ENCODE measurements at regions of chr6 and their contacts with region 1.

Region 1: GRCh38 chr6:37691904-37692806 is 5.5 kb downstream of the MDGA1 start:
- DNase-seq: peak; percentile 69 to 96
- H3K4me3 ChIP-seq: no peak overlapping the region
- H3K27ac ChIP-seq: no peak overlapping the region
- H3K4me1 ChIP-seq: peaks cover 2 to 14% (median 10%) of the 10 kb centered on the region in 4 experiments; a peak in 6 of 7 replicates
- H3K27me3 ChIP-seq: peaks cover 42 to 49% (median 48%) of the 10 kb centered on the region in 4 experiments
- CTCF ChIP-seq: peak in 2 of 3 experiments; percentile 97 to 99; a peak in 3 of 4 replicates
- EP300 ChIP-seq: no peak
- POLR2A ChIP-seq: no peak
- RAD21 ChIP-seq: peak; percentile 99 to 100

Region 2: DNA sequence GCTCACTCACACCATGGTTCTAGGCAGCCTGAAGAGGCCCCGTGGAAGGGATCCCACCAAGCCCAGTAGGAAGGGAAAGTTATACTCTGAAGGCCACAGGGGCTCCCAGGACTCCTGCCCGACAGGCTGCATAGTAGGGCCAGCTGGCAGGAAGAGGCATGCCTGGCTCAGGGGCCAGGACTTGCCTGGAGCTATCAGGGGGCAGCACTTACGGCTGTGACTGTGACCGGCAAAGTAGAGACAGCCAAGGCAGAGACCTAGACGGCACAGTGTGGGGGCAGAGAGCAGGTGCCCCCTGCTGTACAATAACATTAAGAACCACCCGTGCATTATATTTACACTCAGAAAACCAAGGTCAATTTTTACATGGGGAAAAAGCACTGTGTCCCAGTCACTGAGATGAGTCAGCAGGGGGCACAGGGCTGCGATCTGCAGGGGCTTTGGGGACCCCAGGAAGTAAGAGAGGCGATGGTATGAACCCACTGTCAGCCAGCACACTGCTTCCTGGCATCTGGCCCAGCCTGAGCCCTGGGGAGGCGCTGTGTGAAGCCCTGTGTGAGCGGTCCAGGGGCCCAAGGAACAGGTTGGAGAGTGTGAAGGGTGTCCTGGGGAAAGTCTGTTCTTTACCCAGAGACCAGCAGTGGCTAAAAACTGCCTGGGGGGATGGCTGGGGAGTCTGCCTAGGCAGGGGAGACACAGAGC is 202.3 kb before region 1 on chr6:
- CTCF ChIA-PET with region 1: interaction called, 13 read pairs
- POLR2A ChIA-PET with region 1: interaction called, 3 read pairs
- DNase-seq: no peak
- H3K4me3 ChIP-seq: no peak overlapping the region
- H3K27ac ChIP-seq: no peak overlapping the region
- H3K4me1 ChIP-seq: peaks cover 12 to 30% (median 18%) of the 10 kb centered on the region in 4 experiments
- H3K27me3 ChIP-seq: peaks cover 0 to 2% (median 0%) of the 10 kb centered on the region in 4 experiments; a peak in 1 of 7 replicates
- CTCF ChIP-seq: no peak
- EP300 ChIP-seq: no peak
- POLR2A ChIP-seq: no peak
- RAD21 ChIP-seq: no peak

Region 3: DNA sequence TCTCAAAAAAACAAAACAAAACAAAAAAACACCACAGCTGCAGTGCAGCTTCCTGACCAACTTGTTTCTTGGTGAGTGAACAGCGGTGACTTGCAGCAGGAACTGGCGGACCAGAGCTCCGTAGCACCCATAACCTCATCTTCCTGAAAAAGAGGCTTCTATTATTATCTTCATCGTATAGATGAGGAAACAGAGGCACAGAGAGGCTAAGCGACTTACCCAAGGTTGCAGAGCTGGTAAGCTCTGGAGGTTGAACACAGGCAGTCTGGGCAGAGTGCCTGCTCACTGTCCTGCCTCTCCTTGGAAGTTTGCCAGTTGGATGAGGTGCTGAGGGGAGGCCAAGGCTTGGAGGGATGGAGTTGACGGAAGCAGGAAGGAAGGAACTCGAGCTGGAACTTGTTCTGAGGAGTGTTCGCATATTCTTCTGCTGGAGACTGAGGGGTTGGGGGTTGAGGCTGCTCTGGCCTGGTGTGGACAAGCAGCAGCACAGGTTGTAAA is 144.5 kb before region 1 on chr6:
- CTCF ChIA-PET with region 1: interaction called, 12 read pairs
- POLR2A ChIA-PET with region 1: no interaction called
- DNase-seq: no peak
- H3K4me3 ChIP-seq: no peak overlapping the region
- H3K27ac ChIP-seq: no peak overlapping the region
- H3K4me1 ChIP-seq: no peaks in the 10 kb centered on the region; a peak in 1 of 7 replicates
- H3K27me3 ChIP-seq: no peaks in the 10 kb centered on the region; a peak in 1 of 7 replicates
- CTCF ChIP-seq: no peak
- EP300 ChIP-seq: no peak
- POLR2A ChIP-seq: no peak
- RAD21 ChIP-seq: no peak

Region 4: GRCh38 chr6:37582306-37582705 is 109.8 kb before region 1 on chr6:
- CTCF ChIA-PET with region 1: interaction called, 15 read pairs
- POLR2A ChIA-PET with region 1: interaction called, 4 read pairs
- DNase-seq: no peak
- H3K4me3 ChIP-seq: no peak overlapping the region
- H3K27ac ChIP-seq: no peak overlapping the region
- H3K4me1 ChIP-seq: peaks cover 0 to 9% (median 6%) of the 10 kb centered on the region in 4 experiments; a peak in 4 of 7 replicates
- H3K27me3 ChIP-seq: no peaks in the 10 kb centered on the region; a peak in 2 of 7 replicates
- CTCF ChIP-seq: no peak
- EP300 ChIP-seq: no peak
- POLR2A ChIP-seq: no peak
- RAD21 ChIP-seq: no peak

Region 5: DNA sequence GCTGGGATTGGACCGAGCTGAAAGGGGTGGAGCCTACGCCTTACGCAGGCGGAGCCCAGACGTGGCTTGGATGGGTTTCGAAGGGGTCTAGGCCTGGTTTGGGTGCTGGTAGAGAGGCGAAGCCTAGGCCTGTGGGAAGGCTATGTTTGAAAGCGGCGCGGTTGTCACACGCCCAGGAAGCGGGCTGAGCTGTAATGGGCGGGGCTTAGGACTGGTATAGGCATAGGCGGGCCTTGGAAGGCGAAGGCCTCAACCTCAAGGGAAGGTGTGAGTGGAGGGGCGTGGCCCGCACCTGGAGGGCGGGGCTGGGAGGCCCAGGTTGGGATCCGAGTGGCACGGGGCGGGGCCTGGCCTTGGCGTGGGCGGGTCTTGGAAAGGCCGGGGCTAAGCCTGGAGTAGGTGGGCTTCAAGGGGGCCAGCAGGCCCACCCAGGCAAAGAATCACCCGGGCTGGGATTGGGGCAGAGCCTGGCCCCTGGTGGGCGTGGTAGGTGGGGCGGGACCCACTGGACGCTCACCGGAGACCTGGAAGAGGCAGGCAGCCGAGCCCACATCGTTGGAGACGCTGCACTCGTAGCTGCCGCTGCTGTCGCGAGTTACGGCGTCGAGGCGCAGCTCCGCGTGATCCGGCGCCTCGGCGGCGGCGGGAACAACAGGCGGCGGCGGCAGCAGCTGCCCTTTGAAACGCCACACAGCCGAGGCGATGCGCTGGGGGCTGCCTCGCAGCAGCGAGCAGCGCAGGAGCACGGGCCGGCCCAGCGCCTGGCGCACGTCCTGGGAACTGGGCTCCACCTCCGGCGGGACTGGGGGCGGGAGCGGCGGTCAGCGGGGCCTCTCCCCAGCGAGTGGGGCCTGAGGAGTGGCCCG is 43.5 kb before region 1 on chr6:
- CTCF ChIA-PET with region 1: interaction called, 28 read pairs
- POLR2A ChIA-PET with region 1: no interaction called
- DNase-seq: peak; percentile 77 to 100
- H3K4me3 ChIP-seq: peak overlapping the region; percentile 9 to 54 (median 38)
- H3K27ac ChIP-seq: no peak overlapping the region
- H3K4me1 ChIP-seq: peaks cover 0 to 10% (median 6%) of the 10 kb centered on the region in 4 experiments; a peak in 4 of 7 replicates
- H3K27me3 ChIP-seq: peaks cover 3 to 27% (median 19%) of the 10 kb centered on the region in 4 experiments
- CTCF ChIP-seq: peak in 1 of 3 experiments; percentile 6; a peak in 1 of 4 replicates
- EP300 ChIP-seq: peak in 1 of 2 experiments; percentile 52; a peak in 1 of 3 replicates
- POLR2A ChIP-seq: 0 out of 3 replicates have a peak, but pooled peaks of 1 of the 2 experiments have one; percentile 30
- RAD21 ChIP-seq: no peak

Region 6: GRCh38 chr6:37663019-37663810 is 28.9 kb before region 1 on chr6:
- CTCF ChIA-PET with region 1: interaction called, 11 read pairs
- POLR2A ChIA-PET with region 1: no interaction called
- DNase-seq: no peak
- H3K4me3 ChIP-seq: no peak overlapping the region
- H3K27ac ChIP-seq: no peak overlapping the region
- H3K4me1 ChIP-seq: peaks cover 0 to 6% (median 0%) of the 10 kb centered on the region in 4 experiments; a peak in 3 of 7 replicates
- H3K27me3 ChIP-seq: no peaks in the 10 kb centered on the region; a peak in 2 of 7 replicates
- CTCF ChIP-seq: no peak
- EP300 ChIP-seq: no peak
- POLR2A ChIP-seq: no peak
- RAD21 ChIP-seq: no peak

Region 7: DNA sequence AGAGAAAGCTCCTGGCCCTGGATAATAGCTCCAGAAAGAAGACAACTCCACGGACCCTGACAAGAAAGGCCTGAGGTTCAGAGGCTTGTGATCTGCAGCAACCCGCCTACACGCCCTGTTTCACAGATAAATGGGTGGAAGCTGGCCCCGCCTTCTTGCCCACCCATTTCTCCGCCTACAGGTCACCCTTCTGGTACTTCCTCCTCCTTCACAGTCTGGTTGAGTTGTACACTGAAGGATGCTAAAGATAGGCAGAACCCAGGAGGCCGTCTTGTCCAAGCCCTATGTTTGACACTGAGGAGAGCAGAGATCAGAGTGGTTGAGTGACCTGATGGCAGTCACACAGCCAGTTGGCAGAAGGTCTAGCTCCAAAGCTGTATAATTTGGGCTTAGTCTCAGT is 39.7 kb after region 1 on chr6:
- CTCF ChIA-PET with region 1: no interaction called
- POLR2A ChIA-PET with region 1: no interaction called
- DNase-seq: no peak
- H3K4me3 ChIP-seq: no peak overlapping the region
- H3K27ac ChIP-seq: no peak overlapping the region
- H3K4me1 ChIP-seq: no peaks in the 10 kb centered on the region; a peak in 1 of 7 replicates
- H3K27me3 ChIP-seq: no peaks in the 10 kb centered on the region; a peak in 2 of 7 replicates
- CTCF ChIP-seq: no peak
- EP300 ChIP-seq: no peak
- POLR2A ChIP-seq: no peak
- RAD21 ChIP-seq: no peak

Region 8: GRCh38 chr6:37765182-37765775 is 73.1 kb after region 1 on chr6:
- CTCF ChIA-PET with region 1: no interaction called
- POLR2A ChIA-PET with region 1: no interaction called
- DNase-seq: no peak
- H3K4me3 ChIP-seq: no peak overlapping the region
- H3K27ac ChIP-seq: no peak overlapping the region
- H3K4me1 ChIP-seq: no peaks in the 10 kb centered on the region; a peak in 2 of 7 replicates
- H3K27me3 ChIP-seq: peaks cover 84 to 92% (median 89%) of the 10 kb centered on the region in 4 experiments
- CTCF ChIP-seq: no peak
- EP300 ChIP-seq: no peak
- POLR2A ChIP-seq: no peak
- RAD21 ChIP-seq: no peak